ENCODE measurements at regions of chr2 and their contacts with region 1.

Region 1: GRCh38 chr2:48946449-48947048 is 191.0 kb upstream of the LHCGR start:
- DNase-seq: peak; percentile 43
- ATAC-seq: peak; percentile 86
- H3K4me3 ChIP-seq: no peak overlapping the region
- H3K27ac ChIP-seq: no peak overlapping the region
- H3K4me1 ChIP-seq: no peaks in the 10 kb centered on the region
- H3K27me3 ChIP-seq: no peaks in the 10 kb centered on the region; the same call in 1 of the 2 replicates
- CTCF ChIP-seq: peak; percentile 77
- POLR2A ChIP-seq: no peak
- RAD21 ChIP-seq: peak; percentile 83

Region 2: DNA sequence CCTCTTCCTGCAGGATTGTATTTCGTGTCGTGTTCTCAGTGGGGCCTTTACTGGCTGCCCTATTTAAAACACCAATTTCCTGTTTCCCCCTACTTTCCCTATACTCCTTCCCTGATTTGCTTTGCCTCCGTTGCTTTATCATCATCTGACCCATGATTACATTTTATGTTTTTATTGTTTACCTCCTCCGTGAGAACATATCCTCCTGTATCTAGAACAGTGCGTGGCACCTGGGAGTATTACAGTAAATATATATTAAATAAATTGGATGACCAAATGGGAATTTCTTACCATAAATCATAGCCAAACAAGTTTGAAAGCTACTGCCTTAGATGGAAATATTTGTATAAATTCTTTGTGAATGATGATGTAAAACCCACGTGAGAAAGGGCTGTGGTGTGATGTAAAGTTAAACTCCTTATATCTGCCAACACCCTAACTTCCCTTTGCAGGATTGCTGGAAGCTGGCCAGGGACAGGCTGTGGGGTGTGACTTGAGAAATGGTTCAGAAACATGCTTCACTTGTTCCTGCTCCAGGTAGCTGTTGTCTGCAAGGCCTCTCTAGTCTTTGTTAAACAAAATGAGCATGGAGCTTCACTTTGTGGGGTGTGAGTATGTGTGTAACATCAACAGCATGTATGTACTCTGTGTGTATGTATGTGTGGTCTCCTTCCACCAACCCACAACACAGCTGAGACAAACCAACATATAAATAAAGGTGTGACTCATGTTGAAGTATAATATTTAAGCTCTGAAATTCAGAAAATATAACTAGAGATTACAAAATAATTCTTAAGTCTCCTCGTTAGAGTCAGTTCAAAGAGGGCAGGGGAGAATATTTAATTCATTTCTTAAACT is 231.3 kb before region 1 on chr2:
- CTCF ChIA-PET with region 1: interaction called, 4 read pairs
- POLR2A ChIA-PET with region 1: no interaction called
- dilution Hi-C with region 1: no loop called
- in situ Hi-C with region 1: no loop called
- intact Hi-C with region 1: loop called (anchors 10 kb)
- DNase-seq: peak; percentile 96
- ATAC-seq: peak; percentile 33
- H3K4me3 ChIP-seq: no peak overlapping the region
- H3K27ac ChIP-seq: peak overlapping the region; percentile 94
- H3K4me1 ChIP-seq: peaks cover 26% of the 10 kb centered on the region
- H3K27me3 ChIP-seq: no peaks in the 10 kb centered on the region
- CTCF ChIP-seq: no peak
- POLR2A ChIP-seq: no peak
- RAD21 ChIP-seq: no peak

Region 3: DNA sequence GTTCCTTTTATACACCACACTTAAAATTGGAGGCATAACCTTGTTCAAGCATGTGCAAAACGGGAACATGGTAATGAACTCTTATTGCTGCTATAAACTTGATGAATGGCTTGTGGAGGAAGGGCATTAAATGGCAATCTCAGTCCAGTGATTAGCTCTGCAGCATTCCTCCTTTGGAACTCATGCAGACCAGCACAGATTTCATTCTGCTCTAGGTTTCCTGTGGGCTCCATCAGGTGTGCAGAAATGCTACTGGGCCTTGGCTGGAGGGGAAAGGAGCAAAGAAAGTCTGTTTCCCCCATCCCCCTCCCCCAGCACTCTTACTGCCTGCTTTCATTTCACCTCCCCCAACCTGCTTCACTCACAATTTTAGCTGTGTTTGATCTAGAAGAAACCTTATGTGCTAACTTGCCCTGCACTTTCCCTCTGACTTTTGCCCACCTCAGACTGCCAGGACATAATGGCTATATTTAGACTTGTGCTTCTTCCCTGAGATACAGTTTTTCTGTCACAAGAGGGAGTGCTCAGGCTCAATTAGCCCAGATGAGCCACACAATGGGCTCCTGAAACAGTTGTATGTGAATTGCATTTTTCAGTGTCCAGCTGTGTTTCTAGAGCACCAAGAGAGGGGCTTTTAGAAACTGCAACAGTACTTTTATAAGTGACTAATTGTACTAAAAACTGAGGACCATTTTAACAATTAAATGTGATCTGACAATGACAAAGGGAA is 98.0 kb after region 1 on chr2:
- CTCF ChIA-PET with region 1: no interaction called
- POLR2A ChIA-PET with region 1: no interaction called
- dilution Hi-C with region 1: no loop called
- in situ Hi-C with region 1: no loop called
- intact Hi-C with region 1: no loop called
- DNase-seq: no peak
- ATAC-seq: no peak
- H3K4me3 ChIP-seq: no peak overlapping the region
- H3K27ac ChIP-seq: no peak overlapping the region
- H3K4me1 ChIP-seq: no peaks in the 10 kb centered on the region
- H3K27me3 ChIP-seq: no peaks in the 10 kb centered on the region
- CTCF ChIP-seq: no peak
- POLR2A ChIP-seq: no peak
- RAD21 ChIP-seq: no peak

Region 4: GRCh38 chr2:49240608-49241007 is 294.1 kb after region 1 on chr2:
- CTCF ChIA-PET with region 1: interaction called, 3 read pairs
- POLR2A ChIA-PET with region 1: no interaction called
- dilution Hi-C with region 1: no loop called
- in situ Hi-C with region 1: no loop called
- intact Hi-C with region 1: loop called (anchors 5 kb)
- DNase-seq: peak; percentile 33
- ATAC-seq: peak; percentile 56
- H3K4me3 ChIP-seq: no peak overlapping the region
- H3K27ac ChIP-seq: no peak overlapping the region
- H3K4me1 ChIP-seq: peaks cover 8% of the 10 kb centered on the region
- H3K27me3 ChIP-seq: no peaks in the 10 kb centered on the region
- CTCF ChIP-seq: no peak
- POLR2A ChIP-seq: no peak
- RAD21 ChIP-seq: no peak

Region 5: DNA sequence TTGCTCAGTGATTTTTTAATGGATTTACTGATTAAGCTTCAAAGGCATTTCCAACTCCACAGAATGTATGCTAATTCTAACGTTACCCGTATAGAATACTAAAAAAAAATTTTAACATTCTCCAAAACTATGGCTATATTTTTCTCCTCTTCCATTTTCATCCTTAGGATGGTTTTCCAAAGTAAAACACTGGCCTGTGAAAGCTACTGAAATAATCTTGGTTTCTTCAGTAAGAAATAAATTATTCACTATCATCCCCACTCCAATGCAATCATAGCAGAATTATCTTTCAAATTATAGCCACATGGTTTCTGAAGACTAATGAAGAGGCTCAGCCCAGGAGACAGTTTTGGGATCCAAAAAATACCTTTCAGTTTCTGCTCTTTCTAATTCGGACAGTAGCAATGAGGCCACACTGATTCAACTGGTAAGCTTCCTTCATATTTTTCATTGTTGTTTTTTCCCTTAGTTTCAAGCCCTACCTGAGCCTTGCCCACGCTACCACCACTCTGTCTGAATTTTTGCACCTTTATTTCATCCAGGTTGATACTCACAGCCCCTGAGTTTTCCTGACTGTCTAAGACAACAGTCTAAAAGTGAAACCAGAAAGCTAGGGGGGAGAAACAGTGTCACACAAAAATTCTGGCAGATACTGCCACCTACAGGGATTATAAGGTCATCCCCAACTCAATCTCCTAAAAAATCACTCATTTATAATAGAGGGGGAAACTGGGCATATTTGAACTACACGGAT is 1197.5 kb after region 1 on chr2:
- CTCF ChIA-PET with region 1: interaction called, 3 read pairs
- POLR2A ChIA-PET with region 1: no interaction called
- dilution Hi-C with region 1: no loop called
- in situ Hi-C with region 1: no loop called
- intact Hi-C with region 1: loop called (anchors 1 kb)
- DNase-seq: no peak
- ATAC-seq: peak; percentile 57
- H3K4me3 ChIP-seq: peak overlapping the region; percentile 36; the same call in 1 of the 2 replicates
- H3K27ac ChIP-seq: no peak overlapping the region
- H3K4me1 ChIP-seq: no peaks in the 10 kb centered on the region
- H3K27me3 ChIP-seq: no peaks in the 10 kb centered on the region
- CTCF ChIP-seq: peak; percentile 51
- POLR2A ChIP-seq: no peak
- RAD21 ChIP-seq: peak; percentile 46; the same call in 1 of the 2 replicates

Region 6: DNA sequence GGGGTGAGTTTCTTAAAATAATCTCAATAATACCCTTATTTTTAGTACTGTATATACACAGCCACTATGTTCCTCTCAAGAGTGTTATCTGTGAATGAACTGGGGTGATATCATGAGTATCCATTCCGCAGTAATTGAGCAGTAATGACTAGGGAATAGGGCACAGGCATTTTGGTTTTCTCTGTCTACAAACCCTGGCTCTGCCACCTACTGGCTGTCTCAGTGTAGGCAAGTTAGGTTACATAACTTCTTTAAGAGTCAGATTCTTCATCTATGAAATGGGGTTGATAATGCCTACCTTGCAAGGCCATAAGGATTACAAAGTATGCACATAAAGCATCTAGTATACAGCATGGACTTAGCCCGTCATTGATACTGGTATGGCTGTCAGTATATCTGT is 1529.6 kb after region 1 on chr2:
- CTCF ChIA-PET with region 1: no interaction called
- POLR2A ChIA-PET with region 1: no interaction called
- dilution Hi-C with region 1: no loop called
- in situ Hi-C with region 1: no loop called
- intact Hi-C with region 1: loop called (anchors 5 kb)
- DNase-seq: no peak
- ATAC-seq: no peak
- H3K4me3 ChIP-seq: no peak overlapping the region
- H3K27ac ChIP-seq: no peak overlapping the region
- H3K4me1 ChIP-seq: no peaks in the 10 kb centered on the region
- H3K27me3 ChIP-seq: no peaks in the 10 kb centered on the region
- CTCF ChIP-seq: no peak
- POLR2A ChIP-seq: no peak
- RAD21 ChIP-seq: no peak

Measured in IMR-90 (cell line).